Heart right ventricle (tissue), 16 donors: ENCODE measurements at regions of chr5 and their contacts with region 1.

Region 1: GRCh38 chr5:81194633-81195333 is 38.3 kb upstream of the CKMT2 start:
- DNase-seq: peak; percentile 75 to 86
- ATAC-seq: peak; percentile 94 to 96 (median 95)
- H3K4me3 ChIP-seq: peak overlapping the region in 2 of 10 donors; percentile 1
- H3K27ac ChIP-seq: no peak overlapping the region
- H3K4me1 ChIP-seq: peaks cover 0 to 14% (median 10%) of the 10 kb centered on the region in 9 donors
- H3K27me3 ChIP-seq: no peaks in the 10 kb centered on the region
- CTCF ChIP-seq: peak; percentile 80 to 97 (median 94)

Region 2: DNA sequence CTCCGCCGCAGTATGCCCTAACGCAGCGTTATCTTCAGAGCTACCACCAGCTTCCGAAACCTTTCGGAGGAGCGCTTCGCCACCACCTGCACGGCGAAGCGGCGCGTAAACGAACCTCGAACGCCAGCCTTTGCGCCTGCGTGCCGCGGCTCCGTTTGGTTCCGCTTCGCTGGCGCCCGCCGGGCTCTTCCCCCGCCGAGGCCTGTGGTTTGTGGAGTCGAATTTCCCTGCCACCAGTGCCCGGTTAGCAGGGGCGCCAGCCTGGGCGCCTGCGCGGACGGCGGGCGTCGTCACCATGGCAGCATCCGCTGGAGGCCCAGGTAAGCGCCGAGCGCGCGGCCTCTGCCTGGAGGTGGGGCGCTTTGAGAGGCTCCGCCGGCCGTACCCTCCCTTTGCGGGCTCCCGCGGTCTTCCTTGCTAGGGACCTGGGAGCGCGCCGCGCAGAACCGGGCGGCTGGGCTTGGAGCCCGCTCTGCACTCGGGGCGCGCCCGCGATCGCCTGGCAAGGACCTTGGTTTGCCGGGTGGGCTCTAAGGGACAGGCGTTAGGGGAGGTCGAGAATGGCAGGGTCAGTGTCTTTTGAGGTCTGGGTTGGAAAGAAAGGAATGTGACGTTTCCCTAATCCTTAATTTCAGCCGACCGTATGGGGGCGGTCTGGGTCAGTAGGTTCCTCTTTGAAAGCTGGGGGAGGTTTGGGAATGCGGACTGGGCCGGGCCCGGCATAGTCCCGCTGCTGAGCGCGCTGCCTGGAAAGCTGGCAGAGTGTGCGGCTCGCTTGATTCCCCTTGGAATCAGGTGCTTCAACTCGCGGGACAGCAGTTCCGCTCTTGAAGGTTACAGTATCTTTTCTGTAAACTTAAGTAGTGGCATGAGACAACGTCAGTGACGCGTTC is 706.7 kb before region 1 on chr5 and contains the start of gene FAM151B:
- intact Hi-C with region 1: loop called in 2 of 10 experiments (anchors 10 kb)
- DNase-seq: peak; percentile 72 to 77
- ATAC-seq: peak; percentile 90 to 98 (median 94)
- H3K4me3 ChIP-seq: peak within 1 kb of the TSS; percentile 37 to 78 (median 71)
- H3K27ac ChIP-seq: peak within 1 kb of the TSS in 9 of 10 donors; percentile 54 to 85 (median 80)
- H3K4me1 ChIP-seq: peaks cover 0 to 21% (median 5%) of the 10 kb centered on the region in 9 donors
- H3K27me3 ChIP-seq: no peaks in the 10 kb centered on the region
- CTCF ChIP-seq: peak in 5 of 9 donors; percentile 10 to 52 (median 47)
- total RNA-seq, gene FAM151B: 1.3 to 2.8 (median 1.4) TPM

Region 3: DNA sequence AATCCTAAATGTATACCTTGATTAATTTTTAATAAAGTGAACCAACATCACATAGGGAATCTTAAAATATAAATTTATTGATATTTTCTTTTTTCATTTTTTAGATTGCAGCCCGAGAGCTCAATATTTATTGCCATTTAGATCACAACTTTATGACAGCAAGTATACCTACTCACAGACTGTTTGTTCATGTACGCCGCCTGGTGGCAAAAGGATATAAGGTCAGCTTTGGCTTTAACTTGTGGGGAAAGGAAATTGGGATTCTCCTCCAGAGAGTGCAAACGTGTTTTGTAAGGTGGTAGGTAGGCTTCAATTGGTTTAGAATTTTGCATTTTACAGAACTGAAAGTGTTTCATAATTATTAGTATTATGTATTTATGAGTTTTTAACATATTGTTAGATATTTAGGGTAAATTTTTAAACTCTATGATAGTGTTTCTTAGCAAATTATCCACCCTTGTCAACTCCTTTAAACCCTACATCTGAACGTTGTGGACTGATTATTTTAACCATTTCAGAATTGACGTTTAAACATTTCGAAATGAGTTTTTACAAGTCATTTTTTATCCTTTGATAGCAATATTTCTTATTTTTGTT is 522.5 kb before region 1 on chr5:
- intact Hi-C with region 1: loop called in 1 of 10 experiments (anchors 10 kb)
- DNase-seq: peak; percentile 27 to 58
- ATAC-seq: peak in 6 of 8 donors; percentile 53 to 77 (median 68)
- H3K4me3 ChIP-seq: no peak overlapping the region
- H3K27ac ChIP-seq: no peak overlapping the region
- H3K4me1 ChIP-seq: peaks cover 0 to 7% (median 0%) of the 10 kb centered on the region in 9 donors
- H3K27me3 ChIP-seq: no peaks in the 10 kb centered on the region
- CTCF ChIP-seq: peak; percentile 68 to 89 (median 78)

Region 4: DNA sequence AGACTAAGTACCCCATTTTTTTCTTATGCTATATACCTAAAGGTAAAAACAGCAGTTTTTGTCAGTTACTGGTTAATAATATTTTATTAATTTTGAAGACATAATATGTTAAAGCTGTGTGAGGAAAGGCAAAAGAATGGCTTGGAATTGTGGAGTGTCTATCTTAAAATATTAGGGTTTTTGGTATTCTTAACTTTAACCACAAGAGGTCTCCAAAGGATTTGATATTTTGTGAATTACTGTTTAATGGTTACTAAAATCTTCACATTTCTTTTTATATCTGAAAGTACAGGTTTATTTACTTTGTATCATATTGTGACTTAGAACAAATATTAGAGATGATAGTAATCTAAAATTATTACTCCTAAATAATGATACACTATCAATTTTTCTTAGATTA is 508.0 kb before region 1 on chr5:
- intact Hi-C with region 1: loop called in 6 of 10 experiments (anchors 5 to 10 kb)
- DNase-seq: no peak
- ATAC-seq: no peak
- H3K4me3 ChIP-seq: no peak overlapping the region
- H3K27ac ChIP-seq: no peak overlapping the region
- H3K4me1 ChIP-seq: no peaks in the 10 kb centered on the region
- H3K27me3 ChIP-seq: no peaks in the 10 kb centered on the region
- CTCF ChIP-seq: peak in 7 of 9 donors; percentile 26 to 54 (median 51)

Region 5: DNA sequence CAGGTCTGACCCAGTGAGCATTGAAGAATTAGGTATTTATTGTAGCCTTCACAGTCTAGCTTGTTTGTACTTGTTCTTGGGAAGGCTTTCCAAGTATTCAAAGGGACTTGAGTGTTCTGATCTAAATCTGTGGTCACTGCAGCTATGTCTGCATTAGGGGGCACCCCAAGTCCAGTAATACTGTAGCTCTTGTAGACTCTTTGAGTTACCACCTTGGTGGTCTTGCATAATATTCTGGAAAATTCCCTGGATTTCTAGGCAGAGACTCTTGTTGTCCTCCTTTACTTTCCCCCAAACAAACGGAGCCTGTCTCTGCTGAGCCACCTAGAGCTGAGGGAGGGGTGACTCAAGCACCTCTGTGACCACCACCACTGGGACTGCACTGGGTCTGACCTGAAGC is 390.5 kb before region 1 on chr5:
- intact Hi-C with region 1: loop called in 2 of 10 experiments (anchors 10 kb)
- DNase-seq: no peak
- ATAC-seq: no peak
- H3K4me3 ChIP-seq: no peak overlapping the region
- H3K27ac ChIP-seq: no peak overlapping the region
- H3K4me1 ChIP-seq: peaks cover 0 to 5% (median 0%) of the 10 kb centered on the region in 9 donors
- H3K27me3 ChIP-seq: no peaks in the 10 kb centered on the region
- CTCF ChIP-seq: peak in 4 of 9 donors; percentile 18 to 37 (median 24)

Region 6: DNA sequence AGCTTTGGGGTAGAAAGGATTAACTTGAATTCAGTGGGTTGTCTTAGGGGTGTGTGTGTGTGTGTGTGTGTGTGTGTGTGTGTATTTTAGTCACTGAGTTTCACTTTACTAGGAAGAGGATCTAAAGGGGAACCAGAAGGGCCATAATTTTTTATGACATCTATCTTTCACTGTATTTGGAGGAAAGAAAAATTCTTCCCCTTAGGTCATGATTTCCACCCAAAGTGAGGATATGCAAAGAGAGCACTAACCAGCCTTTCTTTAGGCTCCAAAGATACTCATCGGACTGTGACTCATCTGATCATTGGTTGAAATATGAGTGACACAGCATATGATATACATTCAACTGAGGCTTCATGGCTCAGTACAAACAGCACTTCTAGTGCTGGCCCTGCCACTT is 309.9 kb before region 1 on chr5:
- intact Hi-C with region 1: no loop called
- DNase-seq: no peak
- ATAC-seq: no peak
- H3K4me3 ChIP-seq: no peak overlapping the region
- H3K27ac ChIP-seq: no peak overlapping the region
- H3K4me1 ChIP-seq: peaks cover 0 to 12% (median 0%) of the 10 kb centered on the region in 9 donors
- H3K27me3 ChIP-seq: no peaks in the 10 kb centered on the region
- CTCF ChIP-seq: no peak

Region 7: DNA sequence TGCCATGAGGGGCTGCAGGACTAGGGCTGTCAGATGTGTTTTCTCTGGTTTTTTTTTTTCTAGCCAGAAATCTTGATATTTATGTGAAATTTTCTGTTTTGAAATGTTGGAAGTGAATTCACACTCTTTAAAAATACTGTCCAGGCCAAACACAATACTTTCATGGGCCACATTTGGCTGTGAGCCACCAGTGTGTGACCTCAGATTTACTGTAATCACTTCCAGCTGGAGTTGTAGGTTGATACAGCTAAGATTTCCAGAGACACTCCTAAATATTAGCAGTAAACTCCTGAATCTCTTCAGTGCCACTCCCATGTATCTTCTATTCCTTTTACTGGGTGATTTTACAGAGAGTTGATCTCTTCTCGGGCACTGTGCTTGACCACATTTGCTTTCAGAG is 53.8 kb before region 1 on chr5:
- intact Hi-C with region 1: no loop called
- DNase-seq: peak in 1 of 2 donors; percentile 48
- ATAC-seq: peak in 7 of 8 donors; percentile 42 to 77 (median 44)
- H3K4me3 ChIP-seq: no peak overlapping the region
- H3K27ac ChIP-seq: peak overlapping the region in 1 of 10 donors; percentile 28
- H3K4me1 ChIP-seq: peaks cover 0 to 26% (median 16%) of the 10 kb centered on the region in 9 donors
- H3K27me3 ChIP-seq: no peaks in the 10 kb centered on the region
- CTCF ChIP-seq: no peak

Region 8: DNA sequence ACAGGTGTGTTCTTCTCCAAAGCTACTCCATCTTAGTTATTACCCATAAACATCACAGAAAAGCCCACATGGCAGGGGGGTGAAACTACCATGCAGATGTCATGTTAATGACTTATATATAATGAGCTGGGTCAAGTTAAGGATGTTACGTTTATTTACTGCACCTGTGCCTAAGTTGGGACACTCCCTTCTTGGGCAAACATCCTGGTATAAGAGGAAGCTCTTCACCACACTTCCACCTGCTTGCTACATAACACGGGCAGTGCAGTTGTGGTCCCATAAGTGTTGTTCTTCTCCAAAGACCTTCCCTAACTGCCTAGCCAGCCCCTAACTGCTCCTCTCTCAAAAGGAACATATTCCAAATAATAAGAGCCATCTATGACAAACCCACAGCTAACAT is 97.3 kb after region 1 on chr5:
- intact Hi-C with region 1: loop called in 1 of 10 experiments (anchors 10 kb)
- DNase-seq: no peak
- ATAC-seq: no peak
- H3K4me3 ChIP-seq: no peak overlapping the region
- H3K27ac ChIP-seq: no peak overlapping the region
- H3K4me1 ChIP-seq: peaks cover 0 to 5% (median 0%) of the 10 kb centered on the region in 9 donors
- H3K27me3 ChIP-seq: no peaks in the 10 kb centered on the region
- CTCF ChIP-seq: no peak